ENCODE measurements at regions of chr11 and their contacts with region 1.

Region 1: DNA sequence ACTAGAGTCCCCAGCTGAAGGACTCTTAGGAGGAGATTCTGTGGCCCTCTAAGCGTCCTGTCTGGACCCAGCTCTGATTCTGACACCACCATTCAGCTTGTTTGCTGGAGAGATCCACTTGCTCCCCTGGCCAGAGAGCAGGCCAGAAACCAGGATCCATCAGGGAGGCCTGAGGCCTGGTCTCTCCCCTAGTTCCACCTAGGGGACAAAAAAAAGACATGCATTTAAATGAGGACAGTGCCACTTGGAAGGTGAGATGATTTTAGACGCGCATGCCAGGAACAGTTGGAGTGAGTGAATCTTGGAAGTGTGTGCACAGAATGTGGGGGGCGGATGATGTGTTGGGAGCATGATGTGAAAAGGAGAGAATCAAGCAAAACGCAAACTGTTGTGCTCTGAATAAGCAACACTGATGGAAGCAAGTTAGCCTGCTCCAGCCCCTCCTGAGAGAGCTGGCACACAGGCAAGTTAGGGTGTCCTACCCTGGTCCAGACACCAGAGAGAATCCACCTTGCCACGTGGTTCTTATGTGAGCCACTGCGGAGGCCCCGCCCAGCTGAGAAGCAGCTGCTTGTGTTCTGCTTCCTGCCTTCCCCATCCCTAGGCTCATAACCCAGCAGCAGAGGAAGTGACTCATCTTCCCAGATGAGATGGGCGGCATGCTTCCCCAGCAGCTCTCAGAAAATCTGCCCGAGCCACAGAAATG is 8.0 kb upstream of the SLCO2B1 start:
- DNase-seq: peak; percentile 35 to 97 (median 80)

Region 2: DNA sequence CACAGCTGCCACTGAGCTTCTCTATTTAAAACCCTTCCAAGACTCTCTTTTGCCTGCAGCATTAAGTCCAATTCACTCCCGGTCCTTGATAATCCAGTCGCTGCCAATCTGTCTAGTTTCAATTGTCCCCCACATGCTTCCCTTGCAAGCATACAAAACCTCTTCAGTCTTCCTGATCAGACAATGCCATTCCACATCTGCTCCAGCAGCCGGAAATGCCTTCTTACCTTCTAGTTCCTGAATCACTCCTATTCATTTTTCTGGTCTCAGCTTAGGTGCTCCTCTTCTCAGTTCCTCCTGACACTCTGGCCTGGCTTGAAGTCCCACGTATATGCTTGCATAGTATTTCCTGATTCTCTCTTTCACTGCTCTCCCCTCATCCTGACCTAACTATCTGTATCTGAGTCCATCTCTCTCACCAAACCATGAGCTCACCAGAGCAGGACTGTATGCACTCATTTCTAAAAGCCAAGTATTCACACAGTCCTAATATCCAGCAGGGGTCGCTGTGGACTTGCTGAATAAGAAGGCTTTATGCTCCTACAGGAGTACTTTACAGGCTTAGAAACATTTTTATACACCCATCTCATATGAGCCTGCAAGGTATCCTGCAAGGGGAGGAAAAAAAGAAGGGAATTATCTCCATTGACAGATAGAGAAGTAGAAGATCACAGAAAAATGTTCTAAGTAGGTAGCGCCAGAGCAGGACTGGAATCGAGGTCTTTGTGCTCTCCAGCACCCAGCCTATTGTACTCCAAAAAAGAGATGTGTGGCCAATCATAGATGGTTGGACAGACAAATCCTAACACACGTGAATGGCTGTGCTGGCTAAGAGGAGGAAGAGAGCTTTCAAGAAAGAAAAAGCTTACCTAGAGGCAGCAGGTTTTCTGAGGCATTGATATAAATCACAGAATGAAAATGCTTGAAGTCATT is 213.2 kb before region 1 on chr11:
- intact Hi-C with region 1: loop called (anchors 5 kb)
- DNase-seq: peak in 6 of 10 donors; percentile 50 to 81 (median 70)

Region 3: DNA sequence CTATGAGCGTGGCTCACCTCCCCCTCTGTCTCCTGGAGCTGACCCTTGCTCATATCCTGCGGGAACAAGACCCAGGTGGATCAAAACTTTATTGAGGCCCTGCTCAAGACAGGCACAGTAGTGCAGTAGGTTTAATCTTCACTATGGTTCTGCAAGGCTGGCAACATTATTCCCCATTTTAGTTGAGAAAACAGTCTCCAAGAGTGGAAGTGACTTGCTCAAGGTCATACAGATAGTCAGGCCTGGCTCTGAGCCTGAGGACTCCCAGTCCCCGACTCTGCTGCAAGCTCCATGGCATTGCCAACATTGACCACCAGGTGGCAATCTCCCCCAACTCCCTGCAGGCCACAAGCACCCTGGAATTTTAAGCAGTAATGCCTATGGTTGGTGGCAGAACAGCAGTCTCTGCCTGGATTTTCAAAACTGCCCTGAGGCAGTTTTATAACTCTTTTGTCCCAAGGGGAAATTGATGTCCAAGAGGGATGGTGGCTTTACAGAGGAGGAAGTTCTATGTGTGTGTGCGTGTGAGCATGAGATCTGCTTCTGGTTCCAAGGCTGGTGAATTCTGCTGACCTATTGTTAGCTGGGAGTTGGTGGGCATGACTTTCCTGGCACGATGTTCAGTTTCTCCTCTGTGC is 120.0 kb before region 1 on chr11:
- intact Hi-C with region 1: loop called (anchors 5 kb)
- DNase-seq: peak; percentile 72 to 98 (median 88)

Region 4: GRCh38 chr11:75204685-75205563 is 62.1 kb after region 1 on chr11:
- intact Hi-C with region 1: loop called (anchors 1 kb)
- DNase-seq: peak; percentile 54 to 97 (median 83)

Region 5: DNA sequence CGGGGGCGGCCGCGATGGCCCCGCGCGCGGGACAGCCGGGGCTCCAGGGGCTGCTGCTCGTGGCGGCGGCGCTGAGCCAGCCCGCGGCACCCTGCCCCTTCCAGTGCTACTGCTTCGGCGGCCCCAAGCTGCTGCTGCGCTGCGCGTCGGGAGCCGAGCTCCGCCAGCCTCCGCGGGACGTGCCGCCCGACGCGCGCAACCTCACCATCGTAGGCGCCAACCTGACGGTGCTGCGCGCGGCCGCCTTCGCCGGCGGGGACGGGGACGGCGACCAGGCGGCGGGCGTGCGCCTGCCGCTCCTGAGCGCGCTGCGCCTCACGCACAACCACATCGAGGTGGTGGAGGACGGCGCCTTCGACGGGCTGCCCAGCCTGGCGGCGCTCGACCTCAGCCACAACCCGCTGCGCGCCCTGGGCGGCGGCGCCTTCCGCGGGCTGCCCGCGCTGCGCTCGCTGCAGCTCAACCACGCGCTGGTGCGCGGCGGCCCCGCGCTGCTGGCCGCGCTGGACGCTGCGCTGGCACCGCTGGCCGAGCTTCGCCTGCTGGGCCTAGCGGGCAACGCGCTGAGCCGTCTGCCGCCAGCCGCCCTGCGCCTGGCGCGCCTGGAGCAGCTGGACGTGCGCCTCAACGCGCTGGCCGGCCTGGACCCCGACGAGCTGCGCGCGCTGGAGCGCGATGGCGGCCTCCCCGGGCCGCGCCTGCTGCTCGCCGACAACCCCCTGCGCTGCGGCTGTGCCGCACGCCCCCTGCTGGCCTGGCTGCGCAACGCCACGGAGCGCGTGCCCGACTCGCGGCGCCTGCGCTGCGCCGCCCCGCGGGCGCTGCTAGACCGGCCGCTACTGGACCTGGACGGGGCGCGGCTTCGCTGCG is 98.4 kb after region 1 on chr11:
- intact Hi-C with region 1: loop called (anchors 1 kb)
- DNase-seq: peak; percentile 69 to 97 (median 76)

Region 6: DNA sequence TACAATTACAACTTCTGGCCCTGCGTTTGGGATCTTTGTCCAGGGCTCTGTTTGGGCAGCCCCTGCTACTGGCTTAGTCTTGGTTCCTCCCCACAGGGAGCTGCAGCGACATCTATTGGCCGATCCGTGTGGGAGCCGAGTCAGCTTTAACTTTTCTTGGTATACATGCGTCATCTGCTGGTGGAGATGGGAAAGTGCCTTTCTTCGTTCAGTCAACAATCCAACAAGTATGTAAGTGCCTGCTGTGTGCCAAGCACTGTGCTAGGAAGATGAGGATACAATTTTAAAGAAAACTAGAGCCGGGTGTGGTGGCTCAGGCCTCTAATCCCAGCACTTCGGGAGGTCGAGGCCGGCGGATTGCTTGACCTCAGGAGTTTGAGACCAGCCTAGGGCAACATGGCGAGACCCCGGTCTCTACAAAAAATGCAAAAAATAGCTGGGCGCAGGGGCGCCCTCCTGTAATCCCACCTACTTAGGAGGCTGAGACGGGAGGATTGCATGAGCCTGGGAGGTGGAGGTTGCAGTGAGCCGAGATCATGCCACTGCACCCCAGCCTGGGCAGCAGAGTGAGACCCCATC is 105.9 kb after region 1 on chr11:
- intact Hi-C with region 1: loop called (anchors 2 kb)
- DNase-seq: peak; percentile 75 to 98 (median 88)